Mucosa of descending colon (tissue), 3 donors: ENCODE measurements at regions of chr6 and their contacts with region 1.

Region 1: GRCh38 chr6:127464881-127465459 is 5.8 kb upstream of the KIAA0408 start:
- DNase-seq: peak in 2 of 3 donors; percentile 50 to 70
- ATAC-seq: peak; percentile 89
- H3K4me3 ChIP-seq: no peak overlapping the region
- H3K4me1 ChIP-seq: no peaks in the 10 kb centered on the region
- CTCF ChIP-seq: peak; percentile 31

Region 2: DNA sequence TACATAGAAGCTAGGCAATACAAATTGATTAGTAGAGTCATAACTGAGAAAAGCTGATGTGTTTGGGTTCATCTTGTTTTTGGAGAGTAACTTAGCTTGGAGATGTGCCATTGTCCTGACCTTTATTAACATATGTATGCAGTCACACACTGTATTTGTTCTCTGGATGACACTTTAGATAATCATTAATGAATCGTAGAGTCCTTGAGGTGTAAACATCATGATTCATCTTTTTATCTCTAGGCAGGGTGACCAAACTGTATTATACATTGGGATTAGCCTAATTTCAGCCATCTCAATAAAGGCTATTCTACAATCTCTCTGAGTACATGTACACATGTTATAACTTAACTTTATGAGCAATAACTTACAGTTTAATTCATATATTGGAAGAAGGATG is 57.7 kb after region 1 on chr6:
- intact Hi-C with region 1: no loop called
- DNase-seq: no peak
- ATAC-seq: no peak
- H3K4me3 ChIP-seq: no peak overlapping the region
- H3K4me1 ChIP-seq: peaks cover 6% of the 10 kb centered on the region
- CTCF ChIP-seq: no peak

Region 3: GRCh38 chr6:127539272-127539671 is 74.3 kb after region 1 on chr6:
- intact Hi-C with region 1: loop called in 1 of 2 experiments (anchors 5 kb)
- DNase-seq: no peak
- ATAC-seq: no peak
- H3K4me3 ChIP-seq: no peak overlapping the region
- H3K4me1 ChIP-seq: no peaks in the 10 kb centered on the region
- CTCF ChIP-seq: no peak